SK-N-SH (cell line): ENCODE measurements at regions of chr1 and their contacts with region 1.

Region 1: DNA sequence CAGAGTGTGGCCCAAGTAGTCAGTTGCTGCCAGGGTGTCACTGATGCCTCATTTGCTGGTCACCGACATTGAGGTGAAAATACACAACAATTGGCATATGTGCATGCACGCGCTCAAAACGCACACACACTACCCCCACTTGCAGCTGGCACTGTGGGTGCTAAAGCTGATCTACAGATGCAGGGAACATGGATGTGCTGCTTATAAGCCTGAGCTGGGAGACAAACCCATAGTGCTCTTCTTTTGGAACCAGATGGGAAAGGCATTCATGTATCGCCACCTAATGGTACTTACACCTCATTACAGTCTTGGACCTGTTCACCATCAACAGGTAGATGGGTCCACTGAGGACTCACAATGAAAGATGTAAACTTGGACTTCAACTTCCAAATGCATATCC is 70.3 kb upstream of the CAMK1G start:
- DNase-seq: peak; percentile 49
- H3K4me3 ChIP-seq: no peak overlapping the region; a peak in 1 of 4 replicates
- H3K27ac ChIP-seq: no peak overlapping the region
- H3K4me1 ChIP-seq: no peaks in the 10 kb centered on the region
- H3K27me3 ChIP-seq: no peaks in the 10 kb centered on the region
- CTCF ChIP-seq: peak; percentile 69
- EP300 ChIP-seq: no peak
- RAD21 ChIP-seq: peak; percentile 82

Region 2: DNA sequence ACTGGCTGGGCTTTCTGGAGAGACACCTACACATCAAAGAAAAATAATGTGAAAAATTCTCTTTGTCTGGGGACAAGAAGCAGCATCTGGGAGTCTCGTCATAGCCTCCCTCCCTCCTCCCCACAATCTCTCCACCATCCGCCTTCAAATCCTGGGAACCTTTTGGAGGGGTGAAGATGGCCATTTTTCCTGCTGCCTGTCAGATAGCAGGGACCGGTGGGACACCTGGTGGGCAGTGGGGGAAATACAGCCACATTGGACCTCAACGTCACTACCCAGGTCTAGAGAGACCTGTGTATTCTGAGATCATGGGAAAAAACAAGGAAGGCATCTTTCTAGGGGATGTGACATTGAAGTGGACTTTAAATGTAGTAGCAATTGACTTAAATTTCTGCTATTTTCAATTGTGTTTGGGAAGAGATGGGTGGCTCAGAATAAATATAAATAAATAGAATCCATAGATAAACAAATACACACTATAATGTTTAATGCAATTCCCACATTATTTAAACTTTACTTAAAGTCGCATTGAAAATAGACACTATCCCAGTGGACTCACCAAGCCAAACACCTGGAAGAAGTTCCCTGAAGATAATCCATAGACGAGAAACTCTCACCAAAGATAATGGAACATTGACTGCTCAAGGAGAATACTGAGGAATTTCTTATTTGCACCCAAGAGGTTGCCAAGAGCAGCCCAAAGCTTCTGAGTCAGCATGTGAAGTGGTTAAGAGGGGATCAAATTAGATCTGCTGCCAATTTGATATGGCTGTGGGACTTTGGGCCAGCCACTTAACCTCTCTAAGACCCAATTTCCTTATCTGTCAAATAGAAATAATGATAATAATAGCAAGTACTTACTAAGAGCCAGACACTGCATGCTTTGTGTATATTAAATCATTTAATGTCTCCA is 77.3 kb before region 1 on chr1:
- CTCF ChIA-PET with region 1: interaction called, 22 read pairs
- POLR2A ChIA-PET with region 1: no interaction called
- DNase-seq: peak; percentile 86
- H3K4me3 ChIP-seq: no peak overlapping the region; a peak in 1 of 4 replicates
- H3K27ac ChIP-seq: peak overlapping the region in 1 of 2 experiments; percentile 47; a peak in 2 of 4 replicates
- H3K4me1 ChIP-seq: peaks cover 7 to 15% of the 10 kb centered on the region in 2 experiments; a peak in 3 of 4 replicates
- H3K27me3 ChIP-seq: no peaks in the 10 kb centered on the region
- CTCF ChIP-seq: peak; percentile 96
- EP300 ChIP-seq: no peak
- RAD21 ChIP-seq: peak; percentile 96

Region 3: DNA sequence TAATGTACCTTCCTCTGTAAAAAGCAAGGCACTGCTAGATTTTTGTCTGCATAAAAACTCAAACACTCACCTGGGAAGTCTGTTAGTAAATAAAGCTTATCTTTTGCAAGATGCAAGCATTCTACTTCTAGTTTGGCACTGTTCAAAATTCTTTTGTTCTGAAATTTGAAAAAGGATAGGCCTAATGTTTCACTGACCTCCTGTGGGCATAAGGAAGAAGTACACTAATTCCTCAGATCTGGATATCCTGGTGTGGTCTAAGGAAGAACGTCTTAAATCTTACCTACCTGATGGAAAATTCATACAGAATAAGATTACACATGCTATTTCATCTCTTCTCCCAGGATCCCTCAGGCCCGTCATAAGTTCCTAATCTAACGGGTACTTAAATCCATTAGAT is 23.2 kb before region 1 on chr1:
- CTCF ChIA-PET with region 1: interaction called, 16 read pairs
- POLR2A ChIA-PET with region 1: no interaction called
- DNase-seq: peak; percentile 18
- H3K4me3 ChIP-seq: no peak overlapping the region; a peak in 1 of 4 replicates
- H3K27ac ChIP-seq: no peak overlapping the region
- H3K4me1 ChIP-seq: peaks cover 0 to 5% of the 10 kb centered on the region in 2 experiments
- H3K27me3 ChIP-seq: no peaks in the 10 kb centered on the region
- CTCF ChIP-seq: peak; percentile 70
- EP300 ChIP-seq: no peak
- RAD21 ChIP-seq: peak; percentile 73

Region 4: DNA sequence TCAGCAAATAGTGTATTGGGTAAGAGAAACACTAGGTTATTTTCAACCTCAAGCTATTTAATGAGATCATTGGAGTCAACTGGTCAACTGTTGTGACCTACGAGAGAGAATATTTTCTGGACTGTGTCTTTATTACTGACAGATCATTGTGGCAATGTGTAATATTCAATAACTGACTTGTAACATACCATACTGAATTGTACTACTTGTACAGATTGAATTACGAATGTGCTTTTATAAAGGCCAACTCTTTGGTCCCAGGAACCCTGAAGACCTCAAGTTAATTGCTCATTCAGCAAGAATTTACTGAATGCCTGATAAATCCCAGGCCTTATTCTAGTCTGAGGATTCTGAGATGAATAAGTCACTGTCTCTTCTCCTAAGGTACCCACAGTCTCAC is 14.1 kb after region 1 on chr1:
- CTCF ChIA-PET with region 1: interaction called, 33 read pairs
- POLR2A ChIA-PET with region 1: no interaction called
- DNase-seq: no peak
- H3K4me3 ChIP-seq: no peak overlapping the region
- H3K27ac ChIP-seq: peak overlapping the region in 1 of 2 experiments; percentile 76; a peak in 2 of 4 replicates
- H3K4me1 ChIP-seq: no peaks in the 10 kb centered on the region; a peak in 2 of 4 replicates
- H3K27me3 ChIP-seq: no peaks in the 10 kb centered on the region
- CTCF ChIP-seq: no peak
- EP300 ChIP-seq: peak in 1 of 2 experiments; percentile 88; a peak in 2 of 4 replicates
- RAD21 ChIP-seq: no peak

Region 5: GRCh38 chr1:209536843-209537242 is 23.6 kb after region 1 on chr1:
- CTCF ChIA-PET with region 1: interaction called, 11 read pairs
- POLR2A ChIA-PET with region 1: no interaction called
- DNase-seq: no peak
- H3K4me3 ChIP-seq: no peak overlapping the region
- H3K27ac ChIP-seq: no peak overlapping the region
- H3K4me1 ChIP-seq: no peaks in the 10 kb centered on the region
- H3K27me3 ChIP-seq: no peaks in the 10 kb centered on the region
- CTCF ChIP-seq: no peak
- EP300 ChIP-seq: no peak
- RAD21 ChIP-seq: no peak

Region 6: DNA sequence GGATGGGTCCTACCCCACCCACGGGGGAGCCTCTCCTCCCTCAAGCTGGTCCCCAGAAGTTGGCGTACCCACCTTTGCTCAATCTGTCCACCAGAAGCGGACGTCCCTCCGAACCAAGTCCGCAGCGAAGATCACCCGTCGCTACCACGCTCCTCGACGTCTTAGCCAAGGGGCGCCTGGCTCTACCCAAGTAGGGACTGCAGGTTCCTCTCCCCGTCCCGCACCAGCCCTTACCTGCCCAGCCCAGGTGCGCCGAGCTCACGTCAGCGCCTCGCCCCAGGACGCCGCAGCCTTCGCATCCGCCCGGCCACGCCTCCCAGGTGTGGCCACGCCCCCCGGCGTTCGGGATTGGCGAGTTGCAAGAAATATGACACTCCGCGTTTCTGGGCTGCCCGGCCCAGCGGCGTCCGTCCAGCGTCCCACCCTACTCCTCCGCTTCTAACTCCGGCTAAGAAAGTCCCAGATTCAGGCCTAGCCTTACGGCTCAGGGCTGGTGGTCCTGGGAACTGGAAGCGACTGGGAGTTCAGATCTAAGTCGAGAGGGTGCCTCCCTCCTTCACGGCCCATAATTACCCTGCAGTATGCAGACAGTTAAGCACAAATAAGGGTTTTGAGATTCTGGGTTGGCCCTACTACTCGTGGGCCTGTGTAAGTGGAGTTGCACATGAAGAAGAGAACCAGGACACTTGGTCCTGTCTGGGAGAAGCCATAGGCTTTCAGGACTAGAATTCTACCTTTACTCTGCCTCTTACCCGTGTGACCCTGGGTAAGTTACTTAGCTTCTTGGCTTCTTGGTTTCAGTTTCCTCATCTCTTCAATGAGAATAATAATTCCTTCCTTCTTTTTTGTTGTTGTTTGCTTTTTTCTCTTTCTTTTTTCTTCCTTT is 292.9 kb after region 1 on chr1 and contains the start of gene IRF6:
- CTCF ChIA-PET with region 1: no interaction called
- POLR2A ChIA-PET with region 1: no interaction called
- DNase-seq: no peak
- H3K4me3 ChIP-seq: no peak within 1 kb of the TSS
- H3K27ac ChIP-seq: peak within 1 kb of the TSS in 1 of 2 experiments; percentile 84; a peak in 2 of 4 replicates
- H3K4me1 ChIP-seq: peaks cover 20 to 41% of the 10 kb centered on the region in 2 experiments
- H3K27me3 ChIP-seq: no peaks in the 10 kb centered on the region
- CTCF ChIP-seq: no peak
- EP300 ChIP-seq: no peak
- RAD21 ChIP-seq: no peak
- polyA plus RNA-seq, gene IRF6: 0.94 and 1.6 TPM in 2 replicates

Region 7: GRCh38 chr1:209835782-209836298 is 322.6 kb after region 1 on chr1:
- CTCF ChIA-PET with region 1: no interaction called
- POLR2A ChIA-PET with region 1: no interaction called
- DNase-seq: no peak
- H3K4me3 ChIP-seq: no peak overlapping the region
- H3K27ac ChIP-seq: peak overlapping the region; percentile 2 to 98; a peak in 3 of 4 replicates
- H3K4me1 ChIP-seq: peaks cover 11 to 78% of the 10 kb centered on the region in 2 experiments
- H3K27me3 ChIP-seq: no peaks in the 10 kb centered on the region
- CTCF ChIP-seq: no peak
- EP300 ChIP-seq: peak in 1 of 2 experiments; percentile 70; a peak in 2 of 4 replicates
- RAD21 ChIP-seq: no peak